ENCODE measurements at regions of chr5 and their contacts with region 1.

Region 1: DNA sequence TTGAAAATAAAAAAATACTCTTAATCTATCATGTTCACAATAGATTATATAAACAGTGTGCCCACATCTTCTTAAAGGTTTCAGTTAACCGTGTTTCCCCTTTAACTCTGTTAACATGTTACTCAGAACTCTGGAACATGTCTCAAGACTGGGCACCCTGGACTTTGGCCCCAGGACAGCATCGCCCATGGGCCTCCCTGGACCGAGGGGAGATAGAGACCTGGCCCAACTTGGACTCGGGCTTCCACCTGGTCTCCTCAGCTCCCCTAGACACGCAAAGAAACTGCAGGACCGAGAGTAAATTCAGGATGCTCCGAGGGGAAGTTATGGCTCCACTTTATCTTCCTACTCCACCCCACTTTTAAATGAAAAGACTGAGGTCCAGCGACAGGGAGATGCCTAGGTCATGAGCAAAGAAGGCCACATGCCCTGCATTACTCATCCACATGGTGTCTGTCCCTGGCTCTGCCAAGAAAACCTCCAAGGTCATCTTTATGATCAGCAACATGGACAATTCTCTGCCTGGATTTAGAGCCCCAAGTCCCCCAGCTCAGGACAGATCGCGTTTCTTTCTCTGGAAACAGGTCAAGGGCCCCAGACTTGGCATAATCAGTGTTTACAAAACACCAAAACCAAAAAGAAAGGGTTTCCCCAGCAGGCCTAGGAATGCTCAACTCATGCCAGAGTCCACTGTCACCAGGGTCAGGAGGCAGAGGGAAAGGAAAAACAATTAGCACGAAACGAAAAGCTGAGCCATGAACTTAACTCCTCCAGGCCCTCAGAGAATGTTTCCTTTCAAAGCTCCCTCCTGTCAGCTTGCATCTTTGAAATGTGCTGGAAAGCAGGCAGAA is 17.4 kb downstream of the GPX3 start:
- DNase-seq: peak; percentile 49
- H3K4me3 ChIP-seq: no peak overlapping the region
- CTCF ChIP-seq: no peak

Region 2: DNA sequence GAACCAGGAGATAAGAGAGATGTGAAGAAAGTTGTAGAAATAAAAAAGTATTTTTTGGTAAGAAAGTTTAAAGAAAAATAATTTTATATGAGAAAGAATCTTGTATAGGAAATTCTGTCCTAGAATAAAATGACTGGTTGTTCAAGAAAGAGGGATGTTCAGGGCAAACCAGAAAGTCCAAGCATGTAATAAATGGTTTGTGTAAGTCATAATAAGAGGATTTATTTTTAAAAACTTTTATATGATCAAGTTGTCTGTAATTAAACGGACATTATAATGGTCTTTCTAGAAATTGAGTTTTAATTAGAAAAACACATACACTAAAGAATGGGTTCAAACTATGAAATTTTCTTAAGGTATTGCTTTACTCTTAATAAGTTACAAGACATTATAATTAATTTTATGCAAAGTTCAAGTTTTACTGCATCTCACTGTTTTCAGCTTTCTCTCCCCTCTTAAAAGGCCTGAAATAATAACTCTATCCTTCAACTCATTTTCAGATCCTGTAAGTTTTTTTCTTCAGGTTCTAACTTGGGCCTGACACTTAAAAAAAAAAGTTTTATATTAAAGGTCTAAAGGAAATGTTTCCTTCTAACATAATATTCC is 76.9 kb before region 1 on chr5:
- in situ Hi-C with region 1: no loop called
- DNase-seq: no peak
- H3K4me3 ChIP-seq: no peak overlapping the region
- CTCF ChIP-seq: no peak

Region 3: GRCh38 chr5:150999704-151000442 is 37.9 kb before region 1 on chr5:
- in situ Hi-C with region 1: loop called (anchors 5 kb)
- DNase-seq: no peak
- H3K4me3 ChIP-seq: no peak overlapping the region
- CTCF ChIP-seq: no peak

Region 4: DNA sequence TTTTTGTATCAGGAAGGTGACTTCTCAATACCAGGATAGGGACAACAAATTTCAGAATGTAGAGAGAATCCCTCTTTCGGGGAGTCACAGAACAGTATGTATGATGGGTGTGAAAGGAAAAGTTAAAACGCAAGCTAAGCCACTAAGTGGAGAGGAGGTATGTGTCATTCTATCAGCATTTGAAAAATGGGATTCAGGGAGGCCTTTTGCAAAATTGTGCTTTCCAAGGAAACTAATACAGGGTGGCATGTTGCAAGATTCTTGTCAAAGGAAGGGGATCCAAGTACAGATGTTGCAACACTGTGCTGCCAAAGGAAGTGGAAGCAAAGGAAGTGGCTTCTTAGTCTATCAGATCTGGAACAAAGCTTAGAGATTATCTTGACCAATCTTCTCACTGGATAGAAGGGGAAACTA is 55.7 kb after region 1 on chr5:
- in situ Hi-C with region 1: loop called (anchors 5 kb)
- DNase-seq: peak; percentile 61
- H3K4me3 ChIP-seq: no peak overlapping the region
- CTCF ChIP-seq: peak; percentile 32